ENCODE measurements at regions of chr9 and their contacts with region 1.

Region 1: DNA sequence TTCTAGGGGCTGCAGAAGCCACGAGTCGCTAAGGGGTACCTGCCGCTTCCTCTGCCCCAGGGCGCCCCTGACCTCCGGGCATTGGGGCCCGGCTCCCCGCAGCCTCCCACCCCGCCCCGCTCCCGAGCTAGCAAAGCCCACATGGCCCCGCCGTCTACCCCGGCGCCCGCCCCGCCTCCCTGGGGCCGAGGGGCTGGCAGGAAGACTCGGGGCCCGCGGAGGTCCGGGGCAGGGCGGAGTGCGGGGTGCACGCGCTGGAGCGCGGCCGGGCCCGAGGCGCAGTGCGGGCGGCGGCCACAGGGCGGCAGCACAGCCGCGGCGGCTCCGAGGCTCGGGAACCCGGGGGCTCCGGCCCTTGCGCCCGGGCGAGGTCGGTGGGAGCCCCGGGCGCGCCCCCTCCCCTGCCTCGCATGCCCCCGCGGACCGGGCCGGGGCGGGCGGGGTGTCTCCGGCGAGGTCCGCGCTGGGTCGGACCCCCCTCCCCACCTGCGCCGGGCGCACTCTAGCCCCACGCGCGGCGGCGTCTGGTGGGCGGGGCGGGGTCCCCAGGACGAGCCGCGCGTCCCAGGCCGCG is 6.7 kb downstream of the NRARP start:
- DNase-seq: peak; percentile 31 to 77 (median 70)
- ATAC-seq: peak; percentile 11 to 14
- H3K4me3 ChIP-seq: peak overlapping the region; percentile 74
- H3K27ac ChIP-seq: peak overlapping the region; percentile 34
- H3K4me1 ChIP-seq: no peaks in the 10 kb centered on the region
- H3K27me3 ChIP-seq: no peaks in the 10 kb centered on the region

Region 2: DNA sequence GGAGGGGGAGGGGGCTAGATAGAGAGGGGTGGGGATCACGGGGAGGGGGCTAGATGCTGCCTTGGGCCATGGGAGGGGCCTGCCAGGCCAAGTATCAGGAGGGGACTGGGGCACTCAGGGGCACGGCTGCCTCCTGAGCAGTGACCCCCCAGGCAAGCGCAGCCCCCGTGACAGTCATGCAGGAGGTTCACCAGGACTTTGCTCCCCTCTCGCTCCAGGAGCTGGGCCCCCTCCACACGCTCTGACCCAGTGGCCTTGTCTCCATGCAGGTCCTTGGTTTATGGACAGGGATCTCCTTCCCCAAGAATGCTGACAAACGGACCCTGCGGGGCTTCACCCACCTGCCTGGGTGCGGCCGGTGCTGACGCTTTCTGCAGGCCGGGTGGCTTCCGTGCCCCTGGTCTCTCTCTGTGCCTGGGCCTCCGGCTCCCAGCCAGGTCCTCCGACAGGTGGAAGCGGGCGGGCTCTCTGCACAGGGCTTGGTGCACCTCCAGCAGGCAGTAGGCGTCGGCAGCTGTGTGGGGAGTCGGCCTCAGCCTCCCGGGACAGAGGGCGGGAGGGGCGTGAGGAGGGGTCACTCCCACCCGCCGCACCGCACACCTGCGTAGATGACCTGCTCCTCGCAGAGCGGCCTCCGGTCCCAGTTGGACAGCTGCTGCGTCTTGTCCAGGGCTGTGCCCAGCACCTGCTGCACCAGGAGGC is 53.6 kb after region 1 on chr9:
- intact Hi-C with region 1: no loop called
- DNase-seq: peak in 2 of 3 donors; percentile 36 to 64
- ATAC-seq: no peak
- H3K4me3 ChIP-seq: no peak overlapping the region
- H3K27ac ChIP-seq: no peak overlapping the region
- H3K4me1 ChIP-seq: no peaks in the 10 kb centered on the region
- H3K27me3 ChIP-seq: no peaks in the 10 kb centered on the region

Region 3: GRCh38 chr9:137359850-137360249 is 64.5 kb after region 1 on chr9:
- intact Hi-C with region 1: no loop called
- DNase-seq: no peak
- ATAC-seq: no peak
- H3K4me3 ChIP-seq: no peak overlapping the region
- H3K27ac ChIP-seq: no peak overlapping the region
- H3K4me1 ChIP-seq: no peaks in the 10 kb centered on the region
- H3K27me3 ChIP-seq: no peaks in the 10 kb centered on the region

Region 4: DNA sequence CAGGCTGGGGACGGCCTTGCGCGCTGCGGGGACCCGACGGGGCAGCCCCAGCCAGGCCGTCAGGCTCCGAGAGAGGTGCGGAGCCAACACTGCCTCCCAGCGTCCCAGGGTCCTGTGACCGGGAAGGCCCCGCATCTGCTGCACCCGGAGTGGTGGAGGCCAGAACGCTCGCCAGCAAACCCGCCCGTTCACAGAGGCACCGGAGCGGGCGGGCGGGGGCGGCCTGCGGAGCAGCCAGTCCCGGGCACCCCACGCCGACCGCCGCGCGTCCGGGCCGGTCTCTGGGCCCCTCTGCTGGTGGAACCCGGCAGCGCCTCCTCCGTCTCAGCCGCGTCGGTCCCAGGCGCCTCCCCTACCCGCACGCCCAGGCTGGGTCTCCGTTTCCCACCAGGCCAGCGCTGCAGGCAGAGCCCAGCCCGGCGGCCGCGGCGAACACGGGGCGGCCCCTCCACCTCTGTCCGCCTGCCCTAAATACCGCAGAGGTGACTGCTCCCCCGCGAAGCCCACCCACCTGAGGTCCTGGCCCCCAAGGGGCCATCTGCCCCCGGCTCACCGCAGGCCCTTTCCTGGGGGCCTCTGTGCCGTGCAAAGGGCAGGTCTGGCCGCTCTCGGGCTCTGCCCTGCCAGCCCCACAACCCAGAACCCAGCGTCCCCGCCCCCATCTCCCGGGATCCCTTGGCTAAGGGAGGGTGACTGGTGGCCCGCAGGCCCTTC is 111.7 kb after region 1 on chr9:
- intact Hi-C with region 1: loop called (anchors 2 to 10 kb)
- DNase-seq: peak; percentile 75 to 91 (median 88)
- ATAC-seq: peak; percentile 84 to 86
- H3K4me3 ChIP-seq: peak overlapping the region; percentile 32
- H3K27ac ChIP-seq: peak overlapping the region; percentile 46
- H3K4me1 ChIP-seq: no peaks in the 10 kb centered on the region
- H3K27me3 ChIP-seq: no peaks in the 10 kb centered on the region

Region 5: GRCh38 chr9:137521405-137521985 is 226.2 kb after region 1 on chr9:
- intact Hi-C with region 1: loop called in 2 of 4 experiments (anchors 10 kb)
- DNase-seq: no peak
- ATAC-seq: no peak
- H3K4me3 ChIP-seq: no peak overlapping the region
- H3K27ac ChIP-seq: no peak overlapping the region
- H3K4me1 ChIP-seq: no peaks in the 10 kb centered on the region
- H3K27me3 ChIP-seq: no peaks in the 10 kb centered on the region